ENCODE measurements at regions of chr6 and their contacts with region 1.

Region 1: GRCh38 chr6:13593720-13594119 is 19.3 kb downstream of the SIRT5 start:
- DNase-seq: no peak
- H3K4me3 Mint-ChIP-seq: no peak overlapping the region
- H3K27ac Mint-ChIP-seq: no peak overlapping the region
- H3K4me1 Mint-ChIP-seq: no peaks in the 10 kb centered on the region
- H3K27me3 Mint-ChIP-seq: no peaks in the 10 kb centered on the region
- CTCF ChIP-seq: no peak

Region 2: GRCh38 chr6:13604546-13605416 is 11.1 kb after region 1 on chr6:
- CTCF ChIA-PET with region 1: no interaction called
- POLR2A ChIA-PET with region 1: interaction called, 12 read pairs
- intact Hi-C with region 1: no loop called
- DNase-seq: no peak
- H3K4me3 Mint-ChIP-seq: no peak overlapping the region
- H3K27ac Mint-ChIP-seq: no peak overlapping the region
- H3K4me1 Mint-ChIP-seq: no peaks in the 10 kb centered on the region
- H3K27me3 Mint-ChIP-seq: no peaks in the 10 kb centered on the region
- CTCF ChIP-seq: no peak

Measured in MCF 10A (cell line).